Motor neuron (in vitro differentiated cells): ENCODE measurements at regions of chrX and their contacts with region 1.

Region 1: DNA sequence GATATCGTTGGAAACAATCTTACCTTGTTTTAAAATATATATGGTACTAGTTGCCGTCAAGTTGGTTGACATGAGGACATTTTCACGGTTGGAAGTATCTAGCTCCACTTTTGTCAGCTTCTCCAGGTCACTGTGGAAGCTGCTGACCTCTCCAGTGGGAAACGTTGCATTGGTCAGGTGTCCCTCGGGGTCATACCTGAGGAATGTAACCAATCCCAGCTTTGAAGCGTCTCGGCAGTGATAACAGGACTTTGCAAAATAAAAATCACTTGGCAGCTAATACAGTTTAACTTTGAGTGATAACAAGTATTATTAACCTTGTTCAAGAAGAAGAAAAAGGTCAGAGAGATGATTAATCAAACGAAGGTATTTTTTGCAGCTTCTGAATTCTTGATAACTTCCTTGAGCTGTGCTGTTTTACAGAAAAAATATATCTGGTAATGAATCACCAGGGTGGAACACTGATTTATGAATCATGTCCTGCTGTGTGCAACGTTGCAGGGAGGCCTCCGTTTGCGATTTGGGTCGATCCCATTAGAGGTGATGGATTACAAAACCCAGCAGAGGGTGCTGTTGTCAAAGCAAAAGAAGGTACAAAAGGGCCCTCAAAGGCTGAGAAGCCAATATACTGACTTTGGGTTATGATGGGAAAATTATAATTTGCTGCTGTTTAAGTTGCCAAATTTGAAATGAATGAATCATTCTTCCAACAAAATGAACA is 60.1 kb downstream of the SH2D1A start:
- ATAC-seq: peak; percentile 60 to 98 (median 82)
- H3K4me3 ChIP-seq: no peak overlapping the region
- H3K27ac ChIP-seq: no peak overlapping the region
- H3K4me1 ChIP-seq: peaks cover 0 to 4% of the 10 kb centered on the region in 2 donors

Region 2: GRCh38 chrX:125101971-125102755 is 695.7 kb after region 1 on chrX:
- in situ Hi-C with region 1: loop called in 1 of 9 experiments (anchors 25 kb)
- ATAC-seq: no peak
- H3K4me3 ChIP-seq: no peak overlapping the region
- H3K27ac ChIP-seq: no peak overlapping the region
- H3K4me1 ChIP-seq: no peaks in the 10 kb centered on the region

Region 3: GRCh38 chrX:125132285-125132684 is 725.8 kb after region 1 on chrX:
- in situ Hi-C with region 1: loop called in 1 of 9 experiments (anchors 25 kb)
- ATAC-seq: peak in 1 of 8 experiments; percentile 38
- H3K4me3 ChIP-seq: no peak overlapping the region
- H3K27ac ChIP-seq: no peak overlapping the region
- H3K4me1 ChIP-seq: no peaks in the 10 kb centered on the region